K562 (cell line): ENCODE measurements at regions of chr15 and their contacts with region 1.

Region 1: GRCh38 chr15:40807028-40807887 is at the starts of genes DNAJC17 and ZFYVE19:
- DNase-seq: peak; percentile 86 to 98 (median 90)
- ATAC-seq: peak; percentile 99
- H3K4me3 ChIP-seq: peak within 1 kb of the TSS; percentile 81
- H3K27ac ChIP-seq: peak within 1 kb of the TSS; percentile 95
- H3K4me1 ChIP-seq: peaks cover 13 to 15% of the 10 kb centered on the region in 2 experiments; a peak in 4 of 5 replicates
- H3K27me3 ChIP-seq: no peaks in the 10 kb centered on the region
- CTCF ChIP-seq: peak; percentile 8 to 21 (median 12); a peak in 2 of 6 replicates
- EP300 ChIP-seq: no peak
- POLR2A ChIP-seq: peak; percentile 90
- RAD21 ChIP-seq: no peak
- polyA plus RNA-seq, gene DNAJC17: 2.4 to 9.1 TPM
- polyA plus RNA-seq, gene ZFYVE19: 1.5 to 3.6 TPM

Region 2: GRCh38 chr15:40828266-40829182 is 21.3 kb after region 1 on chr15 and contains the start of gene PPP1R14D:
- CTCF ChIA-PET with region 1: no interaction called
- POLR2A ChIA-PET with region 1: interaction called, 10 read pairs
- in situ Hi-C with region 1: no loop called
- intact Hi-C with region 1: no loop called
- DNase-seq: no peak
- ATAC-seq: peak; percentile 37; the same call in 2 of the 3 replicates
- H3K4me3 ChIP-seq: no peak within 1 kb of the TSS
- H3K27ac ChIP-seq: no peak within 1 kb of the TSS
- H3K4me1 ChIP-seq: peaks cover 5 to 28% of the 10 kb centered on the region in 2 experiments; a peak in 4 of 5 replicates
- H3K27me3 ChIP-seq: no peaks in the 10 kb centered on the region
- CTCF ChIP-seq: no peak
- EP300 ChIP-seq: no peak
- POLR2A ChIP-seq: no peak
- RAD21 ChIP-seq: no peak
- polyA plus RNA-seq, gene PPP1R14D: 0.11 to 0.18 TPM